ENCODE measurements at regions of chr6 and their contacts with region 1.

Region 1: DNA sequence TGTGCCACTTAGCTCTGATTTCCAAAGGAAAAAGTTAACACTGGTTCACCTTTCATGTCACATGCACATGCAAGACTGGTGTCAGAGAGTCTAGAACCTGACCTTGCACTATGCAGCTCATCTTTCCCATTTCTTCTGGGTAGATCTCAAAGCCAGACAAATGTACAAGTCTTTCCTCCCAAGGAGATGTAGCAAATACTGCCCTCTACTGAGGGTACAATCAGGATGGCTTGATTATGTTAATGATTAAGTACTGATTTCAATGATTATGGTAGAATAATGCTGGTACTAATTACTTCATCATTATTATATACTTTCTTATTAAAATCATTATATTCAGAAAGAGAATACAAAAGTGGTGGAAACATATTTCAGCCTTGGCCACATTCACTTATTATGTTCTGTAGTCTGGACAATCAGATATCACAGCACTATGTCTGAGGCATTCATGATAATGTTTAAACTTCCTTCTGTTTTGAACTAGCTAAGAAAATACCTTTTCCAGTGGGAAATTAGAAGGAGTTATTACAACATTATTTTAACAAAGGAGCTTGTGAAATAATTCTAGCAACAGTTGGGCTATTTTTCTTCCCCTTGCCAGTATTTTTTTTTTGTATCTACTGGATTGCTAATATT is 68.5 kb upstream of the FOXO3 start:
- DNase-seq: peak in 2 of 9 experiments; percentile 32 to 51
- ATAC-seq: no peak
- H3K4me3 ChIP-seq: no peak overlapping the region
- H3K4me3 Mint-ChIP-seq: no peak overlapping the region
- H3K27ac ChIP-seq: no peak overlapping the region
- H3K27ac Mint-ChIP-seq: no peak overlapping the region
- H3K4me1 ChIP-seq: no peaks in the 10 kb centered on the region
- H3K4me1 Mint-ChIP-seq: no peaks in the 10 kb centered on the region
- H3K27me3 ChIP-seq: no peaks in the 10 kb centered on the region
- H3K27me3 Mint-ChIP-seq: no peaks in the 10 kb centered on the region
- CTCF ChIP-seq: peak; percentile 48

Region 2: DNA sequence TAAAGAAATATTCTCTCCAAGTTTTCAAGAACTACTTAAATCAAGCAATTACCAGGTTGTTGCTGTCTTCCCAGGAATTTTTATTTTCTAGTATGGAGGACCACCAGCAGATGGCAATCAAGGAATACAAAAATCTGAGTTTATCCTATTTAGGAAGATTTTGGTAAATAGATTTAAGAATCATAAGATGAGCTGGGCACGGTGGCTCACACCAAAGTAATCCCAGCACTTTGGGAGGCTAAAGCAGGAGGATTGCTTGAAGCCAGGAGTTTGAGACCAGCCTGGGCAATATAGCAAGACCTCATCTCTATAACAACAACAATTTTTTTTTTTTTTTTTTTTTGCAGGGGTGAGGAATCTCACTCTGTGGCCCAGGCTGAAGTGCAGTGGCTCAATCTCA is 515.0 kb before region 1 on chr6:
- CTCF ChIA-PET with region 1: interaction called, 10 read pairs
- POLR2A ChIA-PET with region 1: no interaction called
- intact Hi-C with region 1: no loop called
- DNase-seq: peak in 1 of 9 experiments; percentile 22
- ATAC-seq: no peak
- H3K4me3 ChIP-seq: no peak overlapping the region
- H3K4me3 Mint-ChIP-seq: no peak overlapping the region
- H3K27ac ChIP-seq: no peak overlapping the region
- H3K27ac Mint-ChIP-seq: no peak overlapping the region
- H3K4me1 ChIP-seq: no peaks in the 10 kb centered on the region
- H3K4me1 Mint-ChIP-seq: peaks cover 2% of the 10 kb centered on the region
- H3K27me3 ChIP-seq: no peaks in the 10 kb centered on the region
- H3K27me3 Mint-ChIP-seq: peaks cover 4% of the 10 kb centered on the region
- CTCF ChIP-seq: no peak

Region 3: DNA sequence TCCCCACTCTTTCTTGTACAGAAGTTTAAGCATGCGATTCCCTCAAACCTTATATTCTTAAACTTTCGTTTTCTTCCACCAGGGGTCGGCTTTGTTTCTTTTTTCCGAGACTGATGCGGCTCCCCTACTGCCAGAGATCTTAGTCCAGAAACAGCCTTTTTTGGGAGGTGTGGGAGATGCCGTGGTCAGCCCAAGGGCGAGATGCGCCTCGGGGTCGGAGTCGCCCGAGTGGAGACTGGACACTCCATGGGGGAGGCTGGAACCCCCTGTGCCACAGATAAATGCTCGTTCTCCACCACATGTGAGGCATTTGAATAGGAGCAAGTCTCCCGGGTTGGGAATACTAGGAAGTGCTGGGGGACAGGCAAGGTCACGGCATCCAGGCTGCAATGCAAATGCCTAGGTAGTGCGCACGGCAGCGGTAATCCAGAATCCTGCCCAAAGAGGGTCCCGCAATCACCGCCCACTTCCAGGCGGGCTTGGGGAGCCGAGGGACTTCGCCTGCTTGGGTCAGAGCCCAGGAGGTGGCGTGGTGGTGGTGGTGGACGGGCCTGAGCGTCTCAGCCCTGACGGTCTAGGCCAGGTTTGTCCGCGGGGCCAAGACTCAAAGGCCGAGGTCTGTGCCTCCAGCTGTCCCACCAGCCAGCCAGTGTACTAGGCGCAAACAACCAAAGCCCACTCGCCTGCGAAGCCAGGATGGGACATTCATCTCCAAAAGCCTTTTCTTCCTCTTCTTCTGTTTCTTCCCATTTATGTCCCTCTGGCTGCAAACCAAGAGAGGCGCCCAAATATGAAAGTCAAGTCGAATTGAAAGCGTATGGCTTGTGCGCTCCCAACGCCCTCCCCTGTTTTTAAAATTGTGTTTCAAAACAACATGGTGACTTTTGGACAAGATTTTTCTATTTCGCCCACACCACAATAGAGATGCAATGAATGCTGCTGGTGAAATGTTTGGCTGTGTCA is 378.4 kb before region 1 on chr6:
- CTCF ChIA-PET with region 1: interaction called, 14 read pairs
- POLR2A ChIA-PET with region 1: no interaction called
- intact Hi-C with region 1: loop called in 1 of 2 experiments (anchors 1 kb)
- DNase-seq: peak in 2 of 9 experiments; percentile 43 to 49
- ATAC-seq: no peak
- H3K4me3 ChIP-seq: peak overlapping the region in 1 of 2 experiments; percentile 29
- H3K4me3 Mint-ChIP-seq: peak overlapping the region; percentile 64
- H3K27ac ChIP-seq: no peak overlapping the region
- H3K27ac Mint-ChIP-seq: no peak overlapping the region
- H3K4me1 ChIP-seq: peaks cover 40% of the 10 kb centered on the region
- H3K4me1 Mint-ChIP-seq: peaks cover 41% of the 10 kb centered on the region
- H3K27me3 ChIP-seq: peaks cover 36 to 43% of the 10 kb centered on the region in 2 experiments
- H3K27me3 Mint-ChIP-seq: peaks cover 74% of the 10 kb centered on the region
- CTCF ChIP-seq: peak; percentile 50

Region 4: GRCh38 chr6:108250240-108250866 is 241.9 kb before region 1 on chr6:
- CTCF ChIA-PET with region 1: interaction called, 3 read pairs
- POLR2A ChIA-PET with region 1: no interaction called
- intact Hi-C with region 1: loop called in 1 of 2 experiments (anchors 10 kb)
- DNase-seq: peak in 2 of 9 experiments; percentile 22 to 48
- ATAC-seq: peak; percentile 57
- H3K4me3 ChIP-seq: no peak overlapping the region
- H3K4me3 Mint-ChIP-seq: no peak overlapping the region
- H3K27ac ChIP-seq: no peak overlapping the region
- H3K27ac Mint-ChIP-seq: no peak overlapping the region
- H3K4me1 ChIP-seq: peaks cover 6% of the 10 kb centered on the region
- H3K4me1 Mint-ChIP-seq: peaks cover 57% of the 10 kb centered on the region
- H3K27me3 ChIP-seq: no peaks in the 10 kb centered on the region
- H3K27me3 Mint-ChIP-seq: no peaks in the 10 kb centered on the region
- CTCF ChIP-seq: no peak

Region 5: DNA sequence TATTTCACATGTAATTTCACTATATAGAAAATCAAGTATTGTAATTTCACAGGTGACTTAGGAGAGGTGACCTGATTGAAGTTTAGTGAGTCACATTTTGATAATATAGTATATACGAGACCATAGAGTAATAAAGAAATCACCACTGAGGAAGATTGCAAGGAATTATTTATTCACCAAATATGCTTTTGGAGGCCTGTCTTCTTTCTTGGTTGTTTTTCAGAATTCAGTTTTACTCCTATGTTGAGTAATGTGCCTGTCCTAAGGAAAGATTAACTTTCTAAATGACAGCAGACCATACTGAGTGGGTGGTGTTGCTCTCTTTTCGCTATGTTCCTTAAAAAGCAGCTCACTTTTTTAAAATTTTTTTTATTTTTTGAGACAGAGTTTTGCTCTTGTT is 19.1 kb before region 1 on chr6:
- CTCF ChIA-PET with region 1: no interaction called
- POLR2A ChIA-PET with region 1: no interaction called
- intact Hi-C with region 1: no loop called
- DNase-seq: no peak
- ATAC-seq: no peak
- H3K4me3 ChIP-seq: no peak overlapping the region
- H3K4me3 Mint-ChIP-seq: no peak overlapping the region
- H3K27ac ChIP-seq: no peak overlapping the region
- H3K27ac Mint-ChIP-seq: no peak overlapping the region
- H3K4me1 ChIP-seq: no peaks in the 10 kb centered on the region
- H3K4me1 Mint-ChIP-seq: no peaks in the 10 kb centered on the region
- H3K27me3 ChIP-seq: no peaks in the 10 kb centered on the region
- H3K27me3 Mint-ChIP-seq: peaks cover 3% of the 10 kb centered on the region
- CTCF ChIP-seq: no peak